Esophagus muscularis mucosa (tissue), 4 donors: ENCODE measurements at regions of chr18 and their contacts with region 1.

Region 1: DNA sequence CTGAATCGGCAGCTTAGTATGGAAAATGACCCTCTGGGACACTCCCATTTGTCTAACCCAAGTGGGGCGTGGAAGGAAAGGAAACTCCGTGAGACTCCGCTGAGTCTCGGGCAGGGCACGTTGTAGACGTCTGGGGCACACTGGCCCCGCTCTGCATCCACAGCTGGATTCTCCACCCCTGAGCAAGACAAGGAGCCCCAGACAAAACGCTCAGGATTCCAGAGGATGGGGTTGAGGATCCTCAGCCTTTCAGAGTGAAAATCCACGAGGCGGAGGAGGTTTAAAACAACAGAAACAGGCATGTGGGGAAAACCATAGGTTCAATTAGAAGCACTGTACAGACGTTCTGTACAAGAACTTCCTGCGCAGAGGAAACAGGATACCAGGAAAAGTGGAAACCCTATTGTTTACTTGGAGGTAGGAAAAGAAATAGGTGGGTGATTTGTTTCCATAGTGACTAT is 124.9 kb upstream of the ZNF236 start:
- DNase-seq: no peak
- H3K4me3 ChIP-seq: peak overlapping the region in 3 of 4 donors; percentile 11 to 23 (median 12)
- H3K27ac ChIP-seq: peak overlapping the region in 1 of 4 donors; percentile 29
- H3K4me1 ChIP-seq: peaks cover 0 to 7% (median 4%) of the 10 kb centered on the region in 4 donors
- H3K27me3 ChIP-seq: peaks cover 0 to 23% (median 4%) of the 10 kb centered on the region in 4 donors
- CTCF ChIP-seq: no peak
- EP300 ChIP-seq: no peak
- POLR2A ChIP-seq: no peak

Region 2: DNA sequence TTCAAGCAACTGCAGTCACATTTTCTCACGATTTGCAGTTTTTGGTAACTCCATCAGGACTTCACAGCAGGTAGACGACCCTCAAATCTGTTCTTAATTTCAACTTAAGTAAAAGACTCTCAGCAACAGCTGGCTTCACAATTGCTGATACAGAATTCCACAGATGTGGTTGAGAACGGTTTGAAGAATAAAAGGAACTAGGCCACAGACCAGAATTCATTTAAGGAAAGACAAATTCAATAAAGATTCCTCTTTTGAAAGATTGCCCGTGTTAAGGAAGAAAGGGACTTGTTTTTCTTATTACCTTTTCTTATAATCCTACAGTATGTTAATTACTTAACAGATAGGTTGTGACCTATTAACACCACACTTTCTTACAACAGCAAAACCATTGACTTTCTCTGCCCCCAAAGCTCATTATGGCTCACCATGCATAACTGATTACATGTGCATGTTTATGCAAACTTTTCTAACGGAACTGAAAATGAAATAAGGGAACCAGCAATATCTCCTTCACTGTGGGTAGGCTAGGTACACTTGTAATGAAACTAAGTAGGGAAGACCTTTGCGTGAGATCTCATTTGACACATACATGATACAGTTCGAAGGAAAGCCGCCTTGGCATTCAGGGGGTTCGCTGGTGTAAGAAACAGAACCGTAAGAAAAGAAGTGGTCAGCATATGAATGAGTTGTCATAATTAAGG is 197.7 kb before region 1 on chr18:
- intact Hi-C with region 1: loop called (anchors 10 kb)
- DNase-seq: no peak
- H3K4me3 ChIP-seq: no peak overlapping the region
- H3K27ac ChIP-seq: no peak overlapping the region
- H3K4me1 ChIP-seq: peaks cover 0 to 17% (median 7%) of the 10 kb centered on the region in 4 donors
- H3K27me3 ChIP-seq: no peaks in the 10 kb centered on the region
- CTCF ChIP-seq: no peak
- EP300 ChIP-seq: no peak
- POLR2A ChIP-seq: no peak

Region 3: GRCh38 chr18:76657428-76657827 is 40.0 kb before region 1 on chr18:
- intact Hi-C with region 1: loop called (anchors 2 kb)
- DNase-seq: no peak
- H3K4me3 ChIP-seq: no peak overlapping the region
- H3K27ac ChIP-seq: no peak overlapping the region
- H3K4me1 ChIP-seq: no peaks in the 10 kb centered on the region
- H3K27me3 ChIP-seq: peaks cover 0 to 11% (median 0%) of the 10 kb centered on the region in 4 donors
- CTCF ChIP-seq: no peak
- EP300 ChIP-seq: no peak
- POLR2A ChIP-seq: no peak

Region 4: GRCh38 chr18:77346208-77346810 is 648.8 kb after region 1 on chr18:
- intact Hi-C with region 1: no loop called
- DNase-seq: no peak
- H3K4me3 ChIP-seq: no peak overlapping the region
- H3K27ac ChIP-seq: no peak overlapping the region
- H3K4me1 ChIP-seq: no peaks in the 10 kb centered on the region
- H3K27me3 ChIP-seq: peaks cover 0 to 8% (median 0%) of the 10 kb centered on the region in 4 donors
- CTCF ChIP-seq: no peak
- EP300 ChIP-seq: no peak
- POLR2A ChIP-seq: no peak